HepG2 (cell line): ENCODE measurements at regions of chr9 and their contacts with region 1.

Region 1: DNA sequence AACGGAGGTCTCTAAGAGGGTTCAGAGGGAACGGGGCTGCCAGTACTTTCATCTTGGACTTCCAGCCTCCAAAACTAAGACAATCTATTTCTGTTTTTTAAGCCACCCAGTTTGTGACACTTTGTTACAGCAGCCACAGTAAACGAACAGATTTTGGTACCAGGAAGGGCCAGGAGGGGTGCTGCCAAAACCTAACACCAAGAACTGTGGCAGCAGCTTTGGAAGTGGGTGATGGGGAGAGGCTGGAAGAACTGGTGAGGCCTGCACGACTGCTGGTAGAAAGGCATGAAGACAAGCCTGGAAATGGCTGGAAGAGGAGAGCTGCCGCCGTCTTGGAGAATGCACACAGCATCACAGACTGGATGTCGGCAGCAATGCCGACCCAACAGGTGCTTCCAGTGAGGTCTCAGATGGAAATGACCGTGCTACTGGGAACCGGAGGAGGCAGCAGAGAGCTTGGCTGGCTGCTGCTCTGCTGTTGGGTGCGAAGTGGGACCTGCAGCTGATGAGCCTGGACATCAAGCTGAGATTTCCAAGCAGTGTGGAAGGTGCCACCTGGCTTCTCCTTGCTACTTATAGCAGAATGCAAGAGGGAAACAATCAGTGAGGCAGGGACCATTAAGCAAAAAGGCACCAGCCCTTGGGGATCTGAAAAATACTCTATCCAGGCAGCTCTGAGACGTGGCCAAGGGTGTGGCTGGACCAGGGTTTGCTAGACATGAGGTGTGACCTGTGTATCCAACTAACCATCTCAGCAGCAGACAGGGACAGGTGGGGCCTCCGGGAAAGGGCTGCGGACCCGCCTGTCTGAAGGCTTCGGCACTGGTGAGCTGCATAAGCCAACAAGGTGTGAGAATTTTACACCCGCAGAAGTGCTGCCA is 4.7 kb upstream of the TMEM210 start:
- DNase-seq: peak; percentile 49
- ATAC-seq: peak; percentile 69
- H3K4me3 ChIP-seq: no peak overlapping the region
- H3K27ac ChIP-seq: no peak overlapping the region
- H3K4me1 ChIP-seq: no peaks in the 10 kb centered on the region
- H3K27me3 ChIP-seq: peaks cover 0 to 7% of the 10 kb centered on the region in 2 experiments; a peak in 2 of 5 replicates
- CTCF ChIP-seq: peak; percentile 76
- EP300 ChIP-seq: no peak
- POLR2A ChIP-seq: no peak
- RAD21 ChIP-seq: no peak

Region 2: DNA sequence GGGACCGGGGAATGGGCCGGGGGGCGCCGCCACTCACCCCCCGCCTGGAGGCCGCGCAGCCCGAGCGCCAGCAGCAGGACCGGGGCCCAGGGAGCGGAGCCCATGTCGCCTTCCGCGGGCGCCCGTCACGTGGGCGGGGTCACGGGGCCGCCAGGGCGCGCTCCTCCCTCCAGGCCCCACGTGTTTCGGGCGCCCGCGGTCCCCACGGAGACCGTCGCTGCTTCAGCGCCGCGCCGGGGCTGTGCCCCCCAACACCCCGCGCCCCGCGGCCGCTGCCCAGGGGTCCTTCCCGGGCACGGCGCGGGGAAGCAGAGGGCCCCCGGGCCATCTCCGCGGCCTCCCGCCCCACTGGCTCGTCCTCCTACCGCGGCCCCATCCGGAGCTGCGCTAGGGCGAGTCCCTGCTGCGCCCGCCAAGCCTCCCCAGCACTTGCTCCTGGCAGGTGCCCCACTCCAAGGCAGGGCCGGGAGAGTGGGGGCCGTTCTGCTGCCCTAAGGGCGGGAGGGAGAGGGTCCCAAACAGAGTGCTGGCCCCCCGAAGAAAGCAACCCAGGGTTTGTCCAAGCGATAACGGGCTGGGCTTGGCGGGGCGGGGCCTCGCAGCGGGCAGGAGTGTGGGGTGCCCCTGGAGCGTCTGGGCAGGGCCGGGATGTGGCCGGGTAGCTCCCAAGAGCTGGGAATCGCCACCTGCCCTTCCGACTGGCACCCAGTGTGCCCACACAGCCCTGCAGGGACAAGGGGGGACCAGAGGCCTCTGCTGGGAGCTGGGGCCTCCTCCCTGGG is 61.7 kb before region 1 on chr9 and contains the start of gene DPP7:
- CTCF ChIA-PET with region 1: no interaction called
- POLR2A ChIA-PET with region 1: no interaction called
- in situ Hi-C with region 1: no loop called
- intact Hi-C with region 1: loop called (anchors 10 kb)
- DNase-seq: no peak
- ATAC-seq: no peak
- H3K4me3 ChIP-seq: no peak within 1 kb of the TSS; a peak in 1 of 6 replicates
- H3K27ac ChIP-seq: no peak within 1 kb of the TSS
- H3K4me1 ChIP-seq: peaks cover 64% of the 10 kb centered on the region
- H3K27me3 ChIP-seq: no peaks in the 10 kb centered on the region
- CTCF ChIP-seq: no peak
- EP300 ChIP-seq: no peak
- POLR2A ChIP-seq: no peak
- RAD21 ChIP-seq: no peak
- total RNA-seq, gene DPP7: 0.66 and 1.2 TPM in 2 replicates